ENCODE measurements at regions of chr4 and their contacts with region 1.

Region 1: GRCh38 chr4:154551872-154552686 is 1.9 kb upstream of the PLRG1 start:
- ATAC-seq: peak; percentile 23 to 49 (median 40)
- H3K4me3 ChIP-seq: no peak overlapping the region
- H3K27ac ChIP-seq: no peak overlapping the region
- H3K4me1 ChIP-seq: peaks cover 5 to 12% of the 10 kb centered on the region in 2 donors

Region 2: DNA sequence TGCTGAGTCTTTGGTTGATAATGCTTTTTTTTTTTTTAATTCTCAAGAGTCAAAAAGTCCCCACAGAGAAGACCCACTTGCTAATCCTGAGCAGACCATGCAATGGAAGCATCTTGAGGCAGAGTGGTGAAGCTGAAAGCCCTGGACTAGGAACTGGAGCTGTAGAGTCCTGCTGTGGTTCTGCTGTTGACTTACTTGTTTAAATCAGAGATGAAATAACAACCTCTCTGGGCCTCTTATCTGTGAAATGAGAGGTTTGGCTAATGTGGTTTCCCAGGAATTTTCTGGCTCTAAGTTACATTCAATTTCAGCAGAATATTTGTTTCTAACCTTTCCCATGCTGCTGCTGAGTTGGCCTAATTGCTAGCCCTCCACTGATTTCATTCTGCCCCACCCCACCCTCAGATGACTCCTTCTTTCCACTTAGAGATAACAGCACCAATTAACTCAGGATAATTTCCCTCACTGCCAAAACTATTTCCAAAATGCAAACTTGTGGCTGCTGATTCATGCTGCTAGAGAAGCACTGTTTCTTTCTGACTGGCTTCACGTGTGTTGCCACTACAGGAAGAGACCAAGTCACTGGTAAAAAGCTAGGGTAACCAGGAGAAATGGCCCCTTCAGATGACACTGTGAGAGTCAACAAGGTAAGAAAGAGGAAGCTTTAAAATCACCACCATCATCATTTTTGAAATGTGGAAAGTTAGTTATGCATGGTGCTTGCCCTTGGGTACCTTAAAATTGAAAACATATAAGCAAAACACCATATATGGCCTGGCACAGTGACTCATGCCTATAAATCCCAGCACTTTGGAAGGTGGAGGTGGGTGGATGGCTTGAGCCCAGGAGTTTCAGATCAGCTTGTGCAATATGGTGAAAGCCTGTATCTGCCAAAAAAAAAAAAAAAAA is 386.9 kb before region 1 on chr4:
- in situ Hi-C with region 1: no loop called
- ATAC-seq: peak in 2 of 8 experiments; percentile 95 to 96
- H3K4me3 ChIP-seq: no peak overlapping the region
- H3K27ac ChIP-seq: no peak overlapping the region
- H3K4me1 ChIP-seq: peaks cover 2 to 3% of the 10 kb centered on the region in 2 donors

Region 3: GRCh38 chr4:154626793-154627484 is 74.9 kb after region 1 on chr4:
- in situ Hi-C with region 1: loop called in 2 of 9 experiments (anchors 5 to 10 kb)
- ATAC-seq: peak; percentile 91 to 99 (median 99)
- H3K4me3 ChIP-seq: peak overlapping the region in 4 of 5 donors; percentile 12 to 23 (median 19)
- H3K27ac ChIP-seq: no peak overlapping the region
- H3K4me1 ChIP-seq: peaks cover 3 to 14% of the 10 kb centered on the region in 2 donors

Region 4: DNA sequence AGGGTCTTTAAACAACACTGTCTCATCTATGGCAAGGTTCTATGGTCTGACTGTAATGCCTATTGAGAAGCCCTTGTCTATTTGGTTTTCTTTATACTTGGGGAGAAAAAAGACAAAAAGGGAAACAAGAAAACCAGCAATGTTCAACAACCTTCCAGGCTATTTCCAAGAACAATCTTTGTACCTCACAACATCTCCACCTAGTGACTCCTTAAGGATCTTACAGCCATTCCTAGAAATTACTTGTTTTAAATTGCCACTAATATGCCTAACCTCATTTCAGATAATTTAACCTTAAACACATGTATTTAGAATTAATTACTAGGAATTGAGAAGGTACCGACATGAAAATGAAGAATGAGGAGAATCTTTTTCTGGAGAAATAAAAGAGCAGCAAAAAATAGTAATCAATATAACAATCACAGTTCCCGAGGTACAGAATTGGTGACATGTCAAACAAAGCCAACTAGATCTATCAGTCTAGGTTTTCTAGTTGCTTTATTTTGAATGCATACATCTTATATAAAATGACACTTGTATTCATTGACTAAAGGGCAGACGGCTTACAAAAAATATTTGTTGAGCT is 227.4 kb after region 1 on chr4:
- in situ Hi-C with region 1: loop called in 2 of 9 experiments (anchors 10 to 25 kb)
- ATAC-seq: peak in 3 of 8 experiments; percentile 46 to 60 (median 49)
- H3K4me3 ChIP-seq: no peak overlapping the region
- H3K27ac ChIP-seq: no peak overlapping the region
- H3K4me1 ChIP-seq: no peaks in the 10 kb centered on the region

Region 5: GRCh38 chr4:155353923-155354540 is 802.0 kb after region 1 on chr4:
- in situ Hi-C with region 1: loop called in 1 of 9 experiments (anchors 25 kb)
- ATAC-seq: peak; percentile 56 to 95 (median 81)
- H3K4me3 ChIP-seq: no peak overlapping the region
- H3K27ac ChIP-seq: no peak overlapping the region
- H3K4me1 ChIP-seq: no peaks in the 10 kb centered on the region

Measured in motor neuron (in vitro differentiated cells).